ENCODE measurements at regions of chr3 and their contacts with region 1.

Region 1: GRCh38 chr3:122146466-122146865 is 37.0 kb upstream of the CASR start:
- DNase-seq: peak; percentile 85
- H3K4me3 Mint-ChIP-seq: peak overlapping the region; percentile 19
- H3K27ac Mint-ChIP-seq: peak overlapping the region; percentile 91
- H3K4me1 Mint-ChIP-seq: peaks cover 19% of the 10 kb centered on the region
- H3K27me3 Mint-ChIP-seq: peaks cover under 1% of the 10 kb centered on the region

Region 2: DNA sequence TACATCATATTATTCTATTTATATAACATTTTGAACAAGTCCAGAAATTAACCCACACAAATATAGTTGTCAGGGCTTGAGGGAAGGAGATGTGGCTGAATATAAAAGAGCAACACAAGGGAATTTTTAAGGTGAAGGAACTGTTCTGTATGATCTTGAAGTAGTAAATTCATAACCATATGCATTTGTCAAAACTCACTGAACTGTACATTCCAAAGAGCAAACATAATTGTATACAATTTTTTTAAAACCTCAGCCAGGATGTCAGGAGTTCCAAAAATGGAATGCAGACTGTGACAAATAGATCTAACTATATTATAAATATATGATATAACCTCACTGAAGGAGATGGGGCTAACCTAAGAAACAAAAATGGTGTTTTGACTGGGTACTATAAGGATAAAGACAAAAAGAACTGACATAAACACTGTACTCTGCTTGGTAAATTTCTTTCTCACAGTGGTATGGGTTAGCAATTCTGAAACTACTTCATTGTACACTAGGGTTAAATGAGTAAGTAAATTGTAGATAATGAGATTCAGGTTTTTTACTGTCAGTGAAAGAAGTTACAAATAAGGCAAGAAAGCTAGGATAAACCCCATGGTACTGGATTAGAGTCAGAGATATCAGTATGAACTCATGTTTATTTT is 411.3 kb before region 1 on chr3:
- intact Hi-C with region 1: loop called (anchors 1 kb)
- DNase-seq: no peak
- H3K4me3 Mint-ChIP-seq: no peak overlapping the region
- H3K27ac Mint-ChIP-seq: peak overlapping the region; percentile 60
- H3K4me1 Mint-ChIP-seq: peaks cover 24% of the 10 kb centered on the region
- H3K27me3 Mint-ChIP-seq: no peaks in the 10 kb centered on the region

Region 3: GRCh38 chr3:121749276-121750086 is 397.0 kb before region 1 on chr3 and contains the start of gene GOLGB1:
- intact Hi-C with region 1: loop called (anchors 5 kb)
- DNase-seq: peak; percentile 97
- H3K4me3 Mint-ChIP-seq: no peak within 1 kb of the TSS
- H3K27ac Mint-ChIP-seq: no peak within 1 kb of the TSS
- H3K4me1 Mint-ChIP-seq: peaks cover 9% of the 10 kb centered on the region
- H3K27me3 Mint-ChIP-seq: peaks cover 20% of the 10 kb centered on the region
- total RNA-seq, gene GOLGB1: 21.0 and 22.2 TPM in 2 replicates

Region 4: DNA sequence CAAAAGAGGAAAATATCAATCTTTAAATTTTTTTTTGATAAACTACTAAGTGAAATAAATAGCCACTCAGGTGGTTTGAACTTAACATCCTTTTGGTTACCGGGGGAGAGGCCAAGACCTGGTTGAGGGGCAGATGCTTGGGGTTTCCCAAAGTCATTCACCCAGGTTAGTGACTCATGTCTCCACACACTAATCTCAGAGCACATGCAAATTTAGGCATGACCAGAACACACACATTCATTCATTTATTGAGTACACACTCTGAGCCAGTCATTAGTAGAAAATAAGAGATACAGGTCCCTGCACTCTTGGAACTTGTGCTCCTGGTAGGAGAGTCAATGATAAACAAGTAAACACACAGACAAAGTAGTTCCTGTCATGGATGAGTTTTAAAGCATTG is 131.7 kb before region 1 on chr3:
- intact Hi-C with region 1: loop called (anchors 2 kb)
- DNase-seq: no peak
- H3K4me3 Mint-ChIP-seq: no peak overlapping the region
- H3K27ac Mint-ChIP-seq: no peak overlapping the region
- H3K4me1 Mint-ChIP-seq: peaks cover 21% of the 10 kb centered on the region
- H3K27me3 Mint-ChIP-seq: peaks cover 19% of the 10 kb centered on the region

Region 5: GRCh38 chr3:122258757-122259371 is 112.4 kb after region 1 on chr3:
- intact Hi-C with region 1: loop called (anchors 2 kb)
- DNase-seq: peak; percentile 85
- H3K4me3 Mint-ChIP-seq: no peak overlapping the region
- H3K27ac Mint-ChIP-seq: no peak overlapping the region
- H3K4me1 Mint-ChIP-seq: peaks cover 16% of the 10 kb centered on the region
- H3K27me3 Mint-ChIP-seq: peaks cover 12% of the 10 kb centered on the region

Region 6: DNA sequence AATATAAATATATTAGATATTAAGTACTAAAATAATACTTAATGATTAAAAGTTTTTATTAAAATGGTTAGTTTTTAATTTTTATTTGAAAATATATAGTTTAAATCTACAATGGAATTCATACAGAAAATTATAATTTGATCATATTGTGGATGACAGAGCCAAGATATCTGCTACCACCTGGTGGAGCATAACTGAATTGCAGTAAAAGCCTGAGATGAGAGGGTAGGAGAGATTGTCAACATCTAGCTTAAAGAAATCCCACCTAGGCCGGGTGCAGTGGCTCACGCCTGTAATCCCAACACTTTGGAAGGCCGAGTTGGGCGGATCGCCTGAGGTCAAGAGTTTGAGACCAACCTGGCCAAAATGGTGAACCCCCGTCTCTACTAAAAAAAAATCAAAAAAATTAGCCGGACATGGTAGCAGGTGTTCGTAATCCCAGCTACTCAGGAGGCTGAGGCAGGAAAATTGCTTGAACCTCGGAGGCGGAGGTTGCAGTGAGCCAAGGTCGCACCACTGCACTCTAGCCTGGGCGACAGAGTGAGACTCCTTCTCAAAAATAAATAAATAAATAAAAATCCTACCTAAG is 153.5 kb after region 1 on chr3:
- intact Hi-C with region 1: loop called (anchors 2 kb)
- DNase-seq: peak; percentile 84
- H3K4me3 Mint-ChIP-seq: no peak overlapping the region
- H3K27ac Mint-ChIP-seq: no peak overlapping the region
- H3K4me1 Mint-ChIP-seq: peaks cover 21% of the 10 kb centered on the region
- H3K27me3 Mint-ChIP-seq: no peaks in the 10 kb centered on the region

Region 7: DNA sequence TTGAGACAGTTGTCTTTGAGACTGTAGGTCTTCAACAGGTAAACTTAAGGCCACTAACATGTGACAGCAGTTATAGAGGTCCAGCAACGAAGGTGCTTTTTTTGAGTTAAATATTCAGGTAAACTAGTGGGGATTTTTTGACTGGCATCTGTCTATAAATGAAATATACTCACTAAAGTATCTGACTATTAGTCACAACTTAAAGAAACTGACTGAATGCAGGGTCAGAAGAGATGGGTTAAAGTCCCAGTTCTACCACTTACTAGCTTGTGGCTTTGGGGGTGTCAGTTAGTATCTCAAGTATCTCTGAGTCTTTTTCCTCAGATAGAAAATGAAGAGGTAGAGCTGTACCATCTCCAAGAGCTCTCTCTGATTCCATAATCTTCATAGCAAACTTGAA is 218.6 kb after region 1 on chr3:
- intact Hi-C with region 1: loop called (anchors 1 kb)
- DNase-seq: no peak
- H3K4me3 Mint-ChIP-seq: peak overlapping the region; percentile 30
- H3K27ac Mint-ChIP-seq: peak overlapping the region; percentile 95
- H3K4me1 Mint-ChIP-seq: peaks cover 33% of the 10 kb centered on the region
- H3K27me3 Mint-ChIP-seq: no peaks in the 10 kb centered on the region

Measured in activated CD4-positive, alpha-beta T cell treated with anti-CD3 and anti-CD28 coated beads, Interleukin-2, amount 10 ng/mL, durations not matched to agents 24 days and 14 days (primary cell).